Vagina (tissue), 2 donors: ENCODE measurements at regions of chr4 and their contacts with region 1.

Region 1: DNA sequence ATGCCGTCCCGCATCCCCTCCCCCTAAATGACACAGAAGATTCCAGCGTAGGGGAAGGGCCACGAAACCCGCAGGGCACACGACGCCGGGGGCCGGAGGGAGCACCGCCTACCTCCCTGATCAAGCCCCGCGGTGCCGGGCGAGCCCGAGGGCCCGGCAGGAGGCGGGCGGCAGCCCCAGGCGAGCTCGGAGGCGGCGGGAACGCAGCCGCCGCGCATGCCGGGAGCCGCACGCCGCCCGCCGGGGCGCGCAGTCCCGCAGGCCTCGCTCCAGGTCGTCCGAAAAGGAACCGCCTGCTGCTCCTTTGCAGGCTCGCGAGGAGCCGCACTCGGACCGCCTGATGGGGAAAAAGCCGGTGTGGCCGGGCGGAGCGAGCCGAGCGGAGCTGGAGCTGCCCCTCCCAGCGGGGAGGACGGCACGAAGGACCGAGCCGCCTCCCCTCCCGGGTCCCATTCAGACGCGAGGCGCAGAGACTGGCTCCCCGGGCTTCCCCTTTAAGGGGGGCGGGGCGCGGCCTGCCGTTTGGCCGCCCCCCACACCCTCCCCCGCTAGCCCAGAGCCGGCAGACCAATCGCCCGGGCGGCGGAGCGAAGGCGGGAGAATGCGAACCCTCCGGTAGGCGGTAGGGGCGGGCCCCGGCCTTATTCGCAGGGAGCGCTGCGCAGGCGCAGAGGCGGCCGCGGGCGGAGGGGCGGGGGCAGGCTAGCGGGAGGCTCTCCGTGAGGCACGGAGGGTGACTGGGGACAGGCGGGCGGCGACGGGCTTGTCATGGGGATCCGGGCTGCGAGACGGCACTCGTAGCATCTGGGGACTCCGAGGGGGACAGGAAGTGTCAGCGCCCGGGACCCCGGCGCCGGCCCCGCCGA is 561 bp upstream of the ING2 start:
- DNase-seq: peak in 1 of 2 donors; percentile 98
- H3K4me3 ChIP-seq: peak overlapping the region; percentile 71 to 96
- H3K27ac ChIP-seq: peak overlapping the region; percentile 98
- H3K4me1 ChIP-seq: peaks cover 20% of the 10 kb centered on the region
- H3K27me3 ChIP-seq: no peaks in the 10 kb centered on the region
- CTCF ChIP-seq: peak in 1 of 3 experiments; percentile 1
- POLR2A ChIP-seq: peak in 1 of 2 donors; percentile 47

Region 2: GRCh38 chr4:182917182-182918043 is 586.9 kb before region 1 on chr4 and contains the start of gene DCTD:
- intact Hi-C with region 1: loop called (anchors 10 kb)
- DNase-seq: no peak
- H3K4me3 ChIP-seq: peak within 1 kb of the TSS; percentile 79 to 93
- H3K27ac ChIP-seq: peak within 1 kb of the TSS; percentile 95
- H3K4me1 ChIP-seq: peaks cover 15% of the 10 kb centered on the region
- H3K27me3 ChIP-seq: no peaks in the 10 kb centered on the region
- CTCF ChIP-seq: peak in 1 of 3 experiments; percentile 40
- POLR2A ChIP-seq: peak in 1 of 2 donors; percentile 26
- total RNA-seq, gene DCTD: 40.0 TPM

Region 3: GRCh38 chr4:183588169-183588675 is 83.9 kb after region 1 on chr4:
- intact Hi-C with region 1: loop called (anchors 5 kb)
- DNase-seq: peak in 1 of 2 donors; percentile 93
- H3K4me3 ChIP-seq: peak overlapping the region; percentile 2 to 18
- H3K27ac ChIP-seq: no peak overlapping the region
- H3K4me1 ChIP-seq: no peaks in the 10 kb centered on the region
- H3K27me3 ChIP-seq: no peaks in the 10 kb centered on the region
- CTCF ChIP-seq: no peak
- POLR2A ChIP-seq: no peak

Region 4: DNA sequence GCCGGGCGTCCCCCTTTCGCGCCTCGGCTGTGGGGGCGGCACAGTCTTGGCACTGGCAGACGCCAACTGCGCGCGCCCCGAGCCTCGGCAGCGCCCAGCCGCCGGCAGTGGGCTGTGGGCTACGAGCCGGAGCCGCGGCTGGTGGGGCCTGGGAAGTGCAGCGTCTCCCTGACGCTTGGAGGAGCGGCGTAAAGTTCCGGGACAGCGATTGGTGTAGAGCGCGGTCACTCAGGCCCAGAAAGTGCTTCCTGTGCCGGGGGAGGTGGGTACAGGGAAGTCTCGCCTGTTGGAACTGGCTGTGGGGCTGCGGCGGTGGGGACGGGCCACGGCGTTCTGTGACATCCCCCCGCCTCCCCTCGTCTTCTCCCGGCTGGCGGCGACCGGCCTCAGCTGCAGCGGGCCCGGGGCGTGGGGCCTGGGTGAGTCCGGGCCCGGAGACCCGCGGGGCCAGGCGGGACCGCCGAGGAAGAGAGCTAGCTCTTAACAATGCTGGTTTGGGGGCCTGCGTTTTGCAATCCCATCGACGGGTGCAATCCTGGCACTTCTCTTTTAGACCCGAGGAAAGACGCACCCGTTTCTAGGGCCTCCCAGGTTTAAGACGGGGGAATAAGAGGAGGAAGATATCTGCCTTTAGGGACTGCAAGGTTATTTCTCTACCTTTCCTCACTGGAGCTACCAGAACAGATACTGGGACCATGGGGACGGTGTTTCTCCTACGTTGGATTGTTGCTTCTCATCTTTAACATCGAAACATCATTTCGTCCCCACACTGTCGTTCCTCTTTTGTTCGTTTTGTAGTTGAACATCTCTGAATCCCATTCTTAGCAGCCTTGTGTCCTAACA is 155.0 kb after region 1 on chr4 and contains the starts of genes RWDD4 and TRAPPC11:
- intact Hi-C with region 1: loop called (anchors 10 kb)
- DNase-seq: peak in 1 of 2 donors; percentile 97
- H3K4me3 ChIP-seq: peak within 1 kb of the TSS; percentile 73 to 78
- H3K27ac ChIP-seq: peak within 1 kb of the TSS; percentile 86
- H3K4me1 ChIP-seq: peaks cover 31% of the 10 kb centered on the region
- H3K27me3 ChIP-seq: no peaks in the 10 kb centered on the region
- CTCF ChIP-seq: peak in 1 of 3 experiments; percentile 35
- POLR2A ChIP-seq: peak in 1 of 2 donors; percentile 68
- total RNA-seq, gene RWDD4: 18.2 TPM
- total RNA-seq, gene TRAPPC11: 40.3 TPM

Region 5: GRCh38 chr4:185209031-185209851 is 1704.9 kb after region 1 on chr4 and contains the start of gene SNX25:
- intact Hi-C with region 1: loop called (anchors 5 kb)
- DNase-seq: no peak
- H3K4me3 ChIP-seq: peak within 1 kb of the TSS; percentile 62 to 68
- H3K27ac ChIP-seq: peak within 1 kb of the TSS; percentile 89
- H3K4me1 ChIP-seq: peaks cover 29% of the 10 kb centered on the region
- H3K27me3 ChIP-seq: no peaks in the 10 kb centered on the region
- CTCF ChIP-seq: no peak
- POLR2A ChIP-seq: peak; percentile 68 to 89
- total RNA-seq, gene SNX25: 13.0 TPM